ENCODE measurements at regions of chr1 and their contacts with region 1.

Region 1: DNA sequence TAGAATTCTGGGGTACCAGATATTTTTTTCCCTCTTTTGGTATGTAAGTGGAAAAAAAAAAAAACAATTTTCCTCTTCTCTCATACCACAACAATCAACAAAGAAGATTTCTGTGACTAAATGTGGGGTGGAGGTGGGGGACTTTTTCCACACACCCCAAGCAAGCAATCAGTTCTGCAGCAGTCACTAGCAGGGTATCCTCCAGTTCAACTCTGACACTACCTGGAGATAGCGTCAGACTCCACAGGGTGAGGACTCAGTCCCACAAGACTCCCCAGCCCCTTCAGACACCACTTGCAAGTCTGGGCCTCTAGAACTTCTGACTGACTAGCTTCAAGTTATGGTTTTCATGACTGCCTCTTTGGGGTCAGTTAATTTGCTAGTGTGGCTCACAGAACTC is 6.2 kb downstream of the DHX9 start:
- DNase-seq: no peak
- H3K4me3 ChIP-seq: 0 out of 8 replicates have a peak overlapping the region, but pooled peaks of 1 of the 4 experiments have one; percentile 9
- H3K27ac ChIP-seq: no peak overlapping the region
- H3K4me1 ChIP-seq: peaks cover 0 to 15% (median 6%) of the 10 kb centered on the region in 4 experiments; a peak in 4 of 7 replicates
- H3K27me3 ChIP-seq: no peaks in the 10 kb centered on the region
- CTCF ChIP-seq: no peak
- EP300 ChIP-seq: no peak
- POLR2A ChIP-seq: no peak
- RAD21 ChIP-seq: no peak

Region 2: GRCh38 chr1:182869241-182869666 is 23.9 kb after region 1 on chr1:
- CTCF ChIA-PET with region 1: interaction called, 3 read pairs
- POLR2A ChIA-PET with region 1: interaction called, 93 read pairs
- DNase-seq: peak in 1 of 2 experiments; percentile 85
- H3K4me3 ChIP-seq: no peak overlapping the region
- H3K27ac ChIP-seq: peak overlapping the region; percentile 61
- H3K4me1 ChIP-seq: no peaks in the 10 kb centered on the region
- H3K27me3 ChIP-seq: no peaks in the 10 kb centered on the region
- CTCF ChIP-seq: no peak
- EP300 ChIP-seq: peak in 1 of 2 experiments; percentile 94; a peak in 2 of 3 replicates
- POLR2A ChIP-seq: 0 out of 3 replicates have a peak, but pooled peaks of 1 of the 2 experiments have one; percentile 31
- RAD21 ChIP-seq: no peak

Region 3: GRCh38 chr1:182877842-182878241 is 32.5 kb after region 1 on chr1:
- CTCF ChIA-PET with region 1: interaction called, 8 read pairs
- POLR2A ChIA-PET with region 1: interaction called, 26 read pairs
- DNase-seq: no peak
- H3K4me3 ChIP-seq: no peak overlapping the region
- H3K27ac ChIP-seq: no peak overlapping the region
- H3K4me1 ChIP-seq: no peaks in the 10 kb centered on the region
- H3K27me3 ChIP-seq: no peaks in the 10 kb centered on the region
- CTCF ChIP-seq: no peak
- EP300 ChIP-seq: no peak
- POLR2A ChIP-seq: no peak
- RAD21 ChIP-seq: no peak